ENCODE measurements at regions of chr11 and their contacts with region 1.

Region 1: GRCh38 chr11:6812390-6813005 is 13.0 kb upstream of the OR6A2 start:
- DNase-seq: peak; percentile 65
- ATAC-seq: peak; percentile 83
- H3K4me3 ChIP-seq: no peak overlapping the region
- H3K4me3 Mint-ChIP-seq: no peak overlapping the region
- H3K27ac ChIP-seq: no peak overlapping the region
- H3K27ac Mint-ChIP-seq: no peak overlapping the region
- H3K4me1 ChIP-seq: no peaks in the 10 kb centered on the region
- H3K4me1 Mint-ChIP-seq: peaks cover 2% of the 10 kb centered on the region
- H3K27me3 ChIP-seq: peaks cover 0 to 12% (median 10%) of the 10 kb centered on the region in 4 experiments
- H3K27me3 Mint-ChIP-seq: peaks cover 27% of the 10 kb centered on the region
- CTCF ChIP-seq: peak; percentile 98

Region 2: DNA sequence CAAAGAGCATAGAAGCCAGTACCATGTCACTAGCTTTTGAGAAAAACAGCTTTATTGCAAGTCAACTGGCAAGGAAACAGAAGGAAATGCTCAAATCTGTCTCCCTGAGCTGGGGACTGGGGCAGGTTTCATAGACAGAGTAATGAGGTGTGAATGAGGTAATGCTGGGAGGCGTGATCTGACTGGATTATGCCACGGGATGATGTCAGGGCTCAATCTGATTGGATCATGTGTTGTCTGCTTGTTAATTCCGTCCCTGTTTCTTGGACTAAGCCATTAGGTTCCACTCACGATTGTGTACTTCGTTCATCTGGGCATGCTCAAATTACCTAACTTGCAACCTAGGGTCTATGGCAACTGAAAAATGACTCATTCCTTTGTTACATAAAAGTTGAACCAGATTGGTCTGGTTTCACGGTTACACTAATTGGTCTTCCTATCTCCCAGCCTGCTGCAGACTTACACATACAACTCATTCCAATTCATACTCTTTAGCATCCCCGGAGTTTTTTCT is 12.8 kb after region 1 on chr11:
- CTCF ChIA-PET with region 1: interaction called, 10 read pairs
- POLR2A ChIA-PET with region 1: no interaction called
- intact Hi-C with region 1: no loop called
- DNase-seq: no peak
- ATAC-seq: no peak
- H3K4me3 ChIP-seq: no peak overlapping the region
- H3K4me3 Mint-ChIP-seq: no peak overlapping the region
- H3K27ac ChIP-seq: no peak overlapping the region
- H3K27ac Mint-ChIP-seq: no peak overlapping the region
- H3K4me1 ChIP-seq: no peaks in the 10 kb centered on the region
- H3K4me1 Mint-ChIP-seq: no peaks in the 10 kb centered on the region
- H3K27me3 ChIP-seq: no peaks in the 10 kb centered on the region
- H3K27me3 Mint-ChIP-seq: peaks cover 3% of the 10 kb centered on the region
- CTCF ChIP-seq: no peak

Region 3: GRCh38 chr11:7688238-7688826 is 875.8 kb after region 1 on chr11:
- CTCF ChIA-PET with region 1: interaction called, 11 read pairs
- POLR2A ChIA-PET with region 1: no interaction called
- intact Hi-C with region 1: no loop called
- DNase-seq: peak; percentile 48
- ATAC-seq: peak; percentile 54
- H3K4me3 ChIP-seq: no peak overlapping the region
- H3K4me3 Mint-ChIP-seq: no peak overlapping the region
- H3K27ac ChIP-seq: no peak overlapping the region
- H3K27ac Mint-ChIP-seq: no peak overlapping the region
- H3K4me1 ChIP-seq: no peaks in the 10 kb centered on the region
- H3K4me1 Mint-ChIP-seq: no peaks in the 10 kb centered on the region
- H3K27me3 ChIP-seq: peaks cover 0 to 5% (median 3%) of the 10 kb centered on the region in 4 experiments
- H3K27me3 Mint-ChIP-seq: peaks cover 31% of the 10 kb centered on the region
- CTCF ChIP-seq: peak; percentile 90

Region 4: GRCh38 chr11:7696424-7696823 is 883.9 kb after region 1 on chr11:
- CTCF ChIA-PET with region 1: interaction called, 17 read pairs
- POLR2A ChIA-PET with region 1: no interaction called
- intact Hi-C with region 1: no loop called
- DNase-seq: no peak
- ATAC-seq: no peak
- H3K4me3 ChIP-seq: no peak overlapping the region
- H3K4me3 Mint-ChIP-seq: no peak overlapping the region
- H3K27ac ChIP-seq: no peak overlapping the region
- H3K27ac Mint-ChIP-seq: no peak overlapping the region
- H3K4me1 ChIP-seq: peaks cover 2 to 3% of the 10 kb centered on the region in 2 donors
- H3K4me1 Mint-ChIP-seq: no peaks in the 10 kb centered on the region
- H3K27me3 ChIP-seq: peaks cover 0 to 21% (median 16%) of the 10 kb centered on the region in 4 experiments
- H3K27me3 Mint-ChIP-seq: peaks cover 41% of the 10 kb centered on the region
- CTCF ChIP-seq: no peak